Cardiac septum (tissue), 1 donor: ENCODE measurements at regions of chr18 and their contacts with region 1.

Region 1: GRCh38 chr18:50649821-50650220 is 89.9 kb downstream of the MAPK4 start:
- DNase-seq: peak; percentile 82

Region 2: DNA sequence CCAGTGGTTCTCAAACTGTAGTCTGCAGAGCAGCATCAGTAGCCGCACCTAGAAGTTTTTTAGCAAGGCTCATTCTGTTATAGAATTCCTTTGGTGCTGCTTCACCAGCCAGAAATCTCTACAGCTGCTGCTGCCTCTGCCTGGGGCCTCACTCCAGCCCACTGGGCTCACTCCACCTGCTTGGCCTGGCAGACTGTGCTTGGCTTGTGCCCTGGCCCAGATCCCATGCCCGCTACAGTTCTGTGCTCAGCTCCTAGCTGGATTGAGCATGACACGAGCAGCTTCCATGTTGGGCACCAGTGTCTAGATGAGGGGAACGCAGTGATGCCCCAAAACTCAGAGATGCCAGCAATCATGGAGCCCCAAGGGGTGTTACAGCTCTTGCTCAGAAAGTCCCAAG is 67.3 kb before region 1 on chr18:
- intact Hi-C with region 1: loop called (anchors 5 kb)
- DNase-seq: no peak

Region 3: GRCh38 chr18:50687491-50688270 is 37.9 kb after region 1 on chr18:
- intact Hi-C with region 1: no loop called
- DNase-seq: peak; percentile 46

Region 4: DNA sequence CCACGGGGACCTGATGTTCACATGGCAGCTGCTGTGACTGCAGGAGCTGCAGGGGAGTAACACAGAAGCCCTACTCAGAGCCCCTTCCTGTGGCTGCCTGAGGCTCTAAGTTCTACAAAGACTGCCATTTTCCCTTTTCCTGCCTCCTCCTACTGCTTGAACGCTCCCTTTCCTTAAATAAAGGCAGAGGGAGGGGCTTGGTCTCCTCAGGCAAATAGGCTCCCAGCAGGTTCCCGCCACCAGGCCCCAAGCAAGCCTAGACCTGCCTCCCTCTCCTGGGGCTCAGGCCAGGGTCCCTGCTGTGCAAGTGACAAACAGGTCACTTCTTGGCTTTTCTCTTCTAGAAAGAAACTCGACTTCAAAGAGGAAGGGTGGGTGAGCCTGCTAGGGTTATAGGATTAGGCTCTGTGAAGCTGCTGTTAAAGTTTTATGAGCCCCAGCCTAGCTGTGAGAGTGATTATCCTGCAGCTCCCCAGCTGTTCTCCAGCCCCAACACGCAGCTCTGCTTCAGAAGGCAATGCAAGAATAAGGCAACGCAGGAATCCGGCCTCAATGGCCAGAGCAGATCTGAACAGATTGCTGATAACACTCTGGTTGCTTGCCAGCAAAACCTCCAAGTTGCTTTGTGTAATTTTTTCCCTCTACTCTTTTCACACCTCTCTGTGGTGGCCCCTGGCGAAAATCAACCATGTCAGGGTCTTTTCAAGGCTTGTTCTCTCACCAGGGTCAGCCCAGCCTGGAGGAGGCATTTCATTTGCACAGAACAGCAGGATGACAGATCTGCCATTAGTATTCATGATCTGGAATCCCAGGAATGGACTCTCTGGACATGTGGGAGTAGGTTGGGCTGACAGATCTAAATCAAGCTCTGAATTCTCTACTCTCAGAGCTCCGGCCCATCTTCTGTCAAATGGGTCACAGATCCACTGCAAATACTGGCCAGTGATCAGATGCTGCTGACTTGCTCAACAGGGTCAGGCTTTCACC is 98.7 kb after region 1 on chr18:
- intact Hi-C with region 1: no loop called
- DNase-seq: no peak

Region 5: DNA sequence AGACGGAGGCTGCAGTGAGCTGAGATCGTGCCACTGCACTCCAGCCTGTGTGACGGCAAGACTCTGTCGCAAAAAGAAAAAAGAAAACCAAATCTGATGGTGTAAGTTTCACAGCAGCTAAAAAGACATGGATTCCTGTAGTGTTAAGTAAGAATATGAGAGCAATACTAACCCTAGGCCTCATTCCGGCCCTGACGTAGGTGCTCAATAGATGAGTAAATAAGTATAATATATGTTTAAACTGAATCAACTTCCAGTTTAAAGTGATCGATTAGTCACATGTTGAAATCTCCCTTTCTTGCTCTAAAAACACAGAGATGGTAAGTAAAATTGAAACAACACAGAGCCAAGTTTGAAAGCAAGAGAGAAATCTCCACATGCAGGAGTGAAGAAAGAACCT is 237.1 kb after region 1 on chr18:
- intact Hi-C with region 1: no loop called
- DNase-seq: no peak

Region 6: GRCh38 chr18:51355841-51356240 is 706.0 kb after region 1 on chr18:
- intact Hi-C with region 1: no loop called
- DNase-seq: no peak